B cell (primary cell): ENCODE measurements at regions of chr9 and their contacts with region 1.

Region 1: GRCh38 chr9:117782931-117783788 is 79.0 kb downstream of the TLR4 start:
- DNase-seq: peak; percentile 82
- ATAC-seq: peak; percentile 68
- H3K4me3 ChIP-seq: peak overlapping the region; percentile 35 to 67 (median 59)
- H3K4me3 Mint-ChIP-seq: no peak overlapping the region
- H3K27ac ChIP-seq: peak overlapping the region; percentile 50 to 68
- H3K27ac Mint-ChIP-seq: no peak overlapping the region
- H3K4me1 ChIP-seq: peaks cover 10 to 16% of the 10 kb centered on the region in 2 donors
- H3K4me1 Mint-ChIP-seq: no peaks in the 10 kb centered on the region
- H3K27me3 ChIP-seq: no peaks in the 10 kb centered on the region
- H3K27me3 Mint-ChIP-seq: no peaks in the 10 kb centered on the region
- CTCF ChIP-seq: peak; percentile 90

Region 2: DNA sequence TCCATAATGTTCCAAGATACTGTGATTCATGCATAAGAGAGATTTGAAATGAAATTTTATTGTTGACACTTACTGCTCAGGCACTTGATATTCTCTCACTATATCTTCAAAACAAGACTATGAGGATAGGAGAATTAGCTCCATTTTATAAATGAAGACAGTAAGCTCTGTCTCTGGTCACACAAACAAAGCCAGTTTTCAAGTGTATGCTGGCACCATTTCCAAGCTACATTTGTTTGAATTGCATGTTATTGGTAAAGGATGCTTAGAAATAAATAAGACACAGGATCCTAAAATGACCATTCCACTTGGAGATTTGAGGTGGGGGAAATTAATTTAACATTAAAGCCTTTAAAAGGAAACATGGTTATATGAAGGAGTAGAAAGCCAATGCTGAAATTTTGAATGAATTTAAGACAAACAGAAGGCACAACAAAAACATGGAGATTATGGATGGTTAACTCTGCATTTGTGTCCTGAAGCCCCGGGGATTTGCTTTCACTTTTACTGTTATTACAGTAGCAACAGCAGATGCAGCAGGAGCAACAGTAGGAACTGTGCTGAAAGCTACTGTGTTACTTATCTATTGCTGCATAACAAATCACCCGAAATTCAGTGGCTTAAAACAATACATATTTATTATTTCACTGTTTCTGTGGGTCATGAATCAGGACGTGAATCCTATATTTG is 288.6 kb before region 1 on chr9:
- CTCF ChIA-PET with region 1: no interaction called
- POLR2A ChIA-PET with region 1: no interaction called
- intact Hi-C with region 1: no loop called
- DNase-seq: no peak
- ATAC-seq: no peak
- H3K4me3 ChIP-seq: no peak overlapping the region
- H3K4me3 Mint-ChIP-seq: no peak overlapping the region
- H3K27ac ChIP-seq: no peak overlapping the region
- H3K27ac Mint-ChIP-seq: no peak overlapping the region
- H3K4me1 ChIP-seq: no peaks in the 10 kb centered on the region
- H3K4me1 Mint-ChIP-seq: no peaks in the 10 kb centered on the region
- H3K27me3 ChIP-seq: no peaks in the 10 kb centered on the region
- H3K27me3 Mint-ChIP-seq: peaks cover 4% of the 10 kb centered on the region
- CTCF ChIP-seq: no peak

Region 3: GRCh38 chr9:117644133-117644931 is 138.8 kb before region 1 on chr9:
- CTCF ChIA-PET with region 1: interaction called, 3 read pairs
- POLR2A ChIA-PET with region 1: no interaction called
- intact Hi-C with region 1: loop called (anchors 1 kb)
- DNase-seq: peak; percentile 75
- ATAC-seq: peak; percentile 61
- H3K4me3 ChIP-seq: no peak overlapping the region
- H3K4me3 Mint-ChIP-seq: peak overlapping the region; percentile 23
- H3K27ac ChIP-seq: no peak overlapping the region
- H3K27ac Mint-ChIP-seq: no peak overlapping the region
- H3K4me1 ChIP-seq: peaks cover 6 to 10% of the 10 kb centered on the region in 2 donors
- H3K4me1 Mint-ChIP-seq: peaks cover 14% of the 10 kb centered on the region
- H3K27me3 ChIP-seq: no peaks in the 10 kb centered on the region
- H3K27me3 Mint-ChIP-seq: peaks cover 41% of the 10 kb centered on the region
- CTCF ChIP-seq: peak; percentile 98

Region 4: GRCh38 chr9:117704024-117704575 is 79.1 kb before region 1 on chr9 and contains the start of gene TLR4:
- CTCF ChIA-PET with region 1: interaction called, 6 read pairs
- POLR2A ChIA-PET with region 1: no interaction called
- intact Hi-C with region 1: loop called (anchors 2 kb)
- DNase-seq: peak; percentile 86
- ATAC-seq: peak; percentile 97
- H3K4me3 ChIP-seq: peak within 1 kb of the TSS; percentile 25 to 69 (median 57)
- H3K4me3 Mint-ChIP-seq: peak within 1 kb of the TSS; percentile 86
- H3K27ac ChIP-seq: peak within 1 kb of the TSS; percentile 52 to 59
- H3K27ac Mint-ChIP-seq: peak within 1 kb of the TSS; percentile 73
- H3K4me1 ChIP-seq: peaks cover 23% of the 10 kb centered on the region in 2 donors
- H3K4me1 Mint-ChIP-seq: peaks cover 41% of the 10 kb centered on the region
- H3K27me3 ChIP-seq: no peaks in the 10 kb centered on the region
- H3K27me3 Mint-ChIP-seq: no peaks in the 10 kb centered on the region
- CTCF ChIP-seq: no peak
- total RNA-seq, gene TLR4: 3.7 and 4.5 TPM in 2 replicates

Region 5: GRCh38 chr9:117718085-117718484 is 65.1 kb before region 1 on chr9:
- CTCF ChIA-PET with region 1: no interaction called
- POLR2A ChIA-PET with region 1: no interaction called
- intact Hi-C with region 1: loop called (anchors 5 kb)
- DNase-seq: peak; percentile 81
- ATAC-seq: peak; percentile 97
- H3K4me3 ChIP-seq: peak overlapping the region in 1 of 5 experiments; percentile 17
- H3K4me3 Mint-ChIP-seq: peak overlapping the region; percentile 53
- H3K27ac ChIP-seq: no peak overlapping the region
- H3K27ac Mint-ChIP-seq: no peak overlapping the region
- H3K4me1 ChIP-seq: peaks cover 17 to 20% of the 10 kb centered on the region in 2 donors
- H3K4me1 Mint-ChIP-seq: peaks cover 24% of the 10 kb centered on the region
- H3K27me3 ChIP-seq: peaks cover 0 to 12% (median 9%) of the 10 kb centered on the region in 4 experiments
- H3K27me3 Mint-ChIP-seq: peaks cover 2% of the 10 kb centered on the region
- CTCF ChIP-seq: no peak

Region 6: DNA sequence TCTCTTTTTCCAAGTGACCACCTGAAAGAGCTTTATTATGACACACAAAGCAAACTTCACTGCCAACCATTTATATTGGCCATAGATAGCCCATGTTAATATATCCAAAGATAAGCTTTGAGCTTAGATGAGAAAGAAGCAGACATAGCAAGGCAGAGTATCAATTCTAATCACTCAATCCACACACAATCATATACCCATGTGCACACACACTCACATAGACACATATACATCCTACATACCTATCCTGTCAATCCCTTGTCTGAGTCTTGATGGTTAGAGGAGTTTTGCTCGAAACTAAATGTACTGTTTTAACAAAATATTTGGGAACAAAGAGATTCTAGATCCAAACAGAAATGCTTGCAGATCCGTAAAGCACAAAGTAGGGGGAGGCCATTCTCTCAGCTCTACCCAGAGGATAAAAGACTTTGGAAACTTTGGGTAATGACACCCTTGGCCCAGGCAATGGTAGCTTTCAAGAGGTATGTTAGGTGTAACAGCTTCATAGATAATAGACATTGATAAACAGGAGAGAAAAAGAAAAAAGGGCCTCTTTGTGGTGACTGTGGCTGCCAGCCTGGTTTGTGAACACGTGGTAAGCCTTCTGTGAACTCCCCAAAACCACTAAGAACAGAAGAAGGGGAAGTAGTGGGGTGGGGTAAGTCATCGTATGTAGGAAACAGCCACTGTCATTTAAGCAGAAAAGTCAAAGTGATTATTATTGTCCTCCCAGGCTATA is 42.6 kb after region 1 on chr9:
- CTCF ChIA-PET with region 1: interaction called, 3 read pairs
- POLR2A ChIA-PET with region 1: no interaction called
- intact Hi-C with region 1: loop called (anchors 1 kb)
- DNase-seq: peak; percentile 81
- ATAC-seq: peak; percentile 95
- H3K4me3 ChIP-seq: peak overlapping the region in 2 of 5 experiments; percentile 24 to 46
- H3K4me3 Mint-ChIP-seq: peak overlapping the region; percentile 71
- H3K27ac ChIP-seq: no peak overlapping the region
- H3K27ac Mint-ChIP-seq: peak overlapping the region; percentile 74
- H3K4me1 ChIP-seq: peaks cover 31 to 33% of the 10 kb centered on the region in 2 donors
- H3K4me1 Mint-ChIP-seq: peaks cover 35% of the 10 kb centered on the region
- H3K27me3 ChIP-seq: peaks cover 0 to 23% (median 1%) of the 10 kb centered on the region in 4 experiments
- H3K27me3 Mint-ChIP-seq: peaks cover 20% of the 10 kb centered on the region
- CTCF ChIP-seq: no peak